Activated CD8-positive, alpha-beta T cell treated with anti-CD3 and anti-CD28 coated beads for 36 hours (primary cell): ENCODE measurements at regions of chr3 and their contacts with region 1.

Region 1: GRCh38 chr3:119912220-119912619 is 130.3 kb downstream of the NR1I2 start:
- DNase-seq: no peak
- ATAC-seq: peak; percentile 84
- H3K4me3 Mint-ChIP-seq: peak overlapping the region; percentile 29
- H3K27ac Mint-ChIP-seq: peak overlapping the region; percentile 92
- H3K4me1 Mint-ChIP-seq: peaks cover 36% of the 10 kb centered on the region
- H3K27me3 Mint-ChIP-seq: no peaks in the 10 kb centered on the region
- CTCF ChIP-seq: no peak

Region 2: DNA sequence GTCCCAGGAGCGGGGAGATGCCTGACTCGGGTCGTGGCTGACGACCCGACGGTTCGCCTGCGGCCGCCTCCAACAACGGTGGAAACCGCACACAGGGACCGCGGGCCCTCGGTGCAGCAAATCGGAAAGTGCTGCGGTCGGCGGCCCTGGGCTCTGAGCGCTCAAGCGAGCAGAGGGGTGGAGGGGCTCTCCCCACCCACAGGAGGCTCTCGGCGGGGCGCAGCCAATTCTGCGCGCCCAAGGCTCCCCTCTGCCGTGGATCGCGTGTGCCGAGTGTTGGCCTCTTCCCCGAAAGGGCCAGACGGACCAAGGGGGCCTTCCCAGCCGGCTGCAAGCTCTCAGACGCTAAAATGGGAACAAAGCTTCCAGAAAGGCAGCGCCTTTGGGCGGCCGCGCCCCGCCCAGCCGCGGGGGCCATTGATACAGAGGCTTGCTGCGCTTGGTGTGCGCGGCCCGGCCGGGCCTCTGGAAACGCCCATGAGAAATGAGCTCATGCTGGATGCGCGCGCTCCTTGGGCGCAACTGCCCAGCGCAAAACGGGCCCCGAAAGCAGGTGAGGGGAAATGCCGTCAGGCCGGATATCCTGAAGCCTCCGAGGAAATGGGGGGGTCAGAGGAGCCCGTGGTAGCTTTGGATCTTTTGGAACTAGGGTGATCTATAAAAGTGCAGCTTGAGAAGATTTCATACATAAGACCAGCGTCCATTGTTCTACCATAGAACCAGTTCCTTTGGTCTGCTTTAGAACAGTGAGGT is 183.2 kb after region 1 on chr3:
- CTCF ChIA-PET with region 1: interaction called, 6 read pairs
- POLR2A ChIA-PET with region 1: interaction called, 10 read pairs
- intact Hi-C with region 1: loop called (anchors 5 kb)
- DNase-seq: peak; percentile 94
- ATAC-seq: peak; percentile 39
- H3K4me3 Mint-ChIP-seq: no peak overlapping the region
- H3K27ac Mint-ChIP-seq: no peak overlapping the region
- H3K4me1 Mint-ChIP-seq: peaks cover 19% of the 10 kb centered on the region
- H3K27me3 Mint-ChIP-seq: no peaks in the 10 kb centered on the region
- CTCF ChIP-seq: no peak

Region 3: GRCh38 chr3:120147072-120147871 is 235.1 kb after region 1 on chr3:
- CTCF ChIA-PET with region 1: interaction called, 5 read pairs
- POLR2A ChIA-PET with region 1: no interaction called
- intact Hi-C with region 1: loop called (anchors 5 kb)
- DNase-seq: peak; percentile 67
- ATAC-seq: peak; percentile 43
- H3K4me3 Mint-ChIP-seq: no peak overlapping the region
- H3K27ac Mint-ChIP-seq: no peak overlapping the region
- H3K4me1 Mint-ChIP-seq: peaks cover 31% of the 10 kb centered on the region
- H3K27me3 Mint-ChIP-seq: no peaks in the 10 kb centered on the region
- CTCF ChIP-seq: peak; percentile 55